Activated CD4-positive, alpha-beta memory T cell treated with anti-CD3 and anti-CD28 coated beads for 36 hours (primary cell): ENCODE measurements at regions of chr9 and their contacts with region 1.

Region 1: DNA sequence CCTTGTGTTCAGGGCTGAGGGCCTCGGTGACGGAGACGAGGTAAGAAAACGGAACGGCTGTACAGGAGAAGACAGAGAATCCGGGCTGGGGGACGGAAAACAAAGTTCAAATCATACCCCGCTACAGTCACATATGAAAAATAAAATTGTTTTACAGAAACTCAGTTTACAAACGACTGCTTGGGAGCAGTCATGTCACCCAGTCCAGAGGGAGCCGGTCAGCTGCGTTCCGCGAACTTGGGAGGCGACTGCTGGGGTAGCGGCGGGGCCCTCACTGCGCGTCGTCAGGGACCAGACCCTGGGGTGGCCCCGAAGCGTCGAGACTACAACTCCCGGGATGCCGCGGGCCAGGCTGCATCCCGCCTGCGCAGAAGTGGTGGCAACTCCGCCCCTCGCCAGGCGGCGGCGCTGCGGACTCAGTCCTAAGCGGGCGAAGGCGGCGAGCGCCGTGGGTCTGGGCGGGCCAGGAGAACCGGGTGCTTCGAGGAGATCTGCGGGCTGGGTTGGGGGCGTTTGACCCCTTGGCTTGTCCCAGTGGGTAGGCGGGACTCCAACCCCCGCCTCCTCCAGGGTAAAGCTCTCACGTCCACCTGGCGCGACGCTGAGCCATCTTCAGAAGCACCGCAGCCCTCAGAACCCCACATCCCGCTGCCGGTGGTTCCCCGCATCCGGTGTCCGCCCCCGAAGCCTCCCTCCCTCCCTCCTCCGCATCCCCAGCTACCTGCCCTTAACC is 4.0 kb downstream of the SIT1 start:
- DNase-seq: peak; percentile 95
- H3K4me3 Mint-ChIP-seq: peak overlapping the region; percentile 91
- H3K27ac Mint-ChIP-seq: peak overlapping the region; percentile 93
- H3K4me1 Mint-ChIP-seq: peaks cover 49% of the 10 kb centered on the region
- H3K27me3 Mint-ChIP-seq: no peaks in the 10 kb centered on the region

Region 2: DNA sequence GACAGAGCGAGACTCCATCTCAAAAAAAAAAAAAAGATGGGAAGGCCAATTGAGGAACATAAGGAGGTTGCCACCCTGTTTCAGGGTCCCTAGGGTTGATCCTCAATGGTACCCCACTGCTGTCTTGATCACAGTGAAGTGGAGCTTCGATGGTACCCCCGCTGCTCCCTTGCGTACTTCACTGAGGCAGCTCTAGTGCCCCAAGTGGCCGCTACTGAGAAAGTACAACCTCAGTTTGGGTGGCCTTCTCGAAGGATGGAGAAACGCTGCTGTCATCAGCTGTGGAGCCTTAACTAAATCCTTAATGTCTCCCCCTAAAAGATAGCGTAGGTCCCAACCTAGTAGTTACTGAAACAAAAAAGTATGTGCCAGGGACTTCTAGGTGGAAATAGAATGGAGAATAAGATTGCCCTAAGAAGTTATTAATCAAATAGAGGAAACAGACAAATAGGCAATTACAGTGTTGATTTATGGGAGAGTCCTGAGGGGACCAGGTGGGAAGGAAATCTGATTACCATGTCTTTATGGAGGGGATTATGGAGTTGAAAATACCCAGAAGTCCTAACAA is 35.4 kb before region 1 on chr9:
- CTCF ChIA-PET with region 1: interaction called, 32 read pairs
- POLR2A ChIA-PET with region 1: interaction called, 5 read pairs
- intact Hi-C with region 1: no loop called
- DNase-seq: peak; percentile 69
- H3K4me3 Mint-ChIP-seq: no peak overlapping the region
- H3K27ac Mint-ChIP-seq: no peak overlapping the region
- H3K4me1 Mint-ChIP-seq: peaks cover 12% of the 10 kb centered on the region
- H3K27me3 Mint-ChIP-seq: no peaks in the 10 kb centered on the region

Region 3: DNA sequence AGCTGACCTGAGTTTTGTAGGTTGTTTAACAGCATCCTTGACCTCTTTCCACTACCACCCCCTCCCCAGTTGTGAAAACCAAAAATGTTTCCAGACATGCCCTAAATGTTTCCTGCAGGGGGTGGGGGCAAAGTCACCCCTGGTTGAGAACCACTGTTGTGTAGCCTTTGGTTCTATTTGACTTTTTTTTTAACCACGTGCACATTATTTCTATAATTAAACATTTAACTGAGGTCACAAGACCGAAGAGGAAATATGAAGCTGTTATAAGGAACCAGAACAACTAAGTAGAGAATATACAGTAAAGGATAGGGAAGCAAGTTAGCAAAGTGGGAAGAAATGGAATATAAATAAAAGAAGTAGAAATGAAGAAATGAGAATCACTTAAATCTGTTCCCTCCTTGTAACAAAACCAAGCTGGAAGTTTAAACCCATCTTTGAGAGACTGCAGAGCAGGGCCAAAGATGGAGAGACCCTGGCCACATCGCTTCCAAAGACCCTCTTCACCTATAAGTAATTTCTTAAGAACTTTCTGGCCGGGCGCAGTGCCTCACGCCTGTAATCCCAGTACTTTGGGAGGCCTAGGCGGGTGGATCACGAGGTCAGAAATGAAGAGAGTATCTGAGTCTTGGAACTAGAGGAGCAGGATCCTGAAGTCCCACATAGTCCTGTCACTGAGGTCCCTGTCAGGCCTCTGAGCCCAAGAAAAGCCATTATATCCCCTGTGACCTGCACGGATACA is 10.4 kb before region 1 on chr9:
- CTCF ChIA-PET with region 1: interaction called, 5 read pairs
- POLR2A ChIA-PET with region 1: interaction called, 3 read pairs
- intact Hi-C with region 1: loop called (anchors 1 kb)
- DNase-seq: no peak
- H3K4me3 Mint-ChIP-seq: no peak overlapping the region
- H3K27ac Mint-ChIP-seq: peak overlapping the region; percentile 23
- H3K4me1 Mint-ChIP-seq: peaks cover 52% of the 10 kb centered on the region
- H3K27me3 Mint-ChIP-seq: no peaks in the 10 kb centered on the region

Region 4: DNA sequence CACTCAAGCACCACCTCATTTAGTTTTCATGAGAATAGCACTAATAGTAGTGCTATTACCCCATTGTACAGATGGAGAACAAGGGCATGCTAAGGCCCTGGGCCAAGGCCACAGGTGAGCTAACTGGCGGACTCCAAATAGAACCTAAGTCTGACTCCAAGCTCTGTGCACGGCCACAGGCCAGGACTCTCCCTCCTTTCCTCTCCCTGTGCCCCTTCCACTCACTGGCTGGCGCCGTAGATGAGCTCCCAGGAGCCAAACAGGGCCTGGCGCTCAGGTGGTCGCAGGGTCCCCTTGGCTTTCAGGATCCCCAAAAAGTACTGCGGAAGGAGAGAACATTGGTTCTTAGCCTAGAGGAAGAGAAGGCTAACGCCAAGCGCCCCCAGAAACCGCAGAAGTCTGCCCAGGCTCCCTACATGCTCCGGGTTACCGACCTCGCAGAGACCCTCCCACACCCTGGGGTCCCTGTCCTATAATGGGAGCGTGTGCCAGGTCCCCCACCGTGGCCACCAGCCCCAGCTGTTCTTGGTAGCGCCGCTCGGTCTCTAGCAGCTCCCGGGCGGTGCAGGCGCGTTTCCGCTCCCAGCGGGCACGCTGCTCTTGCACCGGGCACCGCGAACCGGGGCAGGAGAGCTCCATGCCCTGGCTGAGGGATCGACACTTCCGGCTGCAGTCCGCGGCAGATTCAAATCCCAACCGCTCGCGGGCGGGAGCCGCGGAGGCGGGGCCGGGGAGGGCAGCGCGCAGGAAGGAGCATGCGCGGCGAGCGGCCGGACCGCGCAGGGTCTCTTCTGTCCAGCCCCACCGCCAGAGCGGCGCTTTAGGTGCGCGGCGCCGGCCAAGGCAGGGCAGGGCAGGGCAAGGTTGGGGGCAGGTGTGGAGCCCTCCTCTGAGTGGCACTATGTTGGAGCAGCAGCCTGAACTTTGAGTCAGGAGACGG is 18.1 kb after region 1 on chr9 and contains the start of gene ARHGEF39:
- CTCF ChIA-PET with region 1: interaction called, 22 read pairs
- POLR2A ChIA-PET with region 1: interaction called, 9 read pairs
- intact Hi-C with region 1: loop called (anchors 2 kb)
- DNase-seq: peak; percentile 89
- H3K4me3 Mint-ChIP-seq: peak within 1 kb of the TSS; percentile 84
- H3K27ac Mint-ChIP-seq: peak within 1 kb of the TSS; percentile 73
- H3K4me1 Mint-ChIP-seq: peaks cover 53% of the 10 kb centered on the region
- H3K27me3 Mint-ChIP-seq: no peaks in the 10 kb centered on the region
- total RNA-seq, gene ARHGEF39: 28.1 to 28.2 TPM

Region 5: DNA sequence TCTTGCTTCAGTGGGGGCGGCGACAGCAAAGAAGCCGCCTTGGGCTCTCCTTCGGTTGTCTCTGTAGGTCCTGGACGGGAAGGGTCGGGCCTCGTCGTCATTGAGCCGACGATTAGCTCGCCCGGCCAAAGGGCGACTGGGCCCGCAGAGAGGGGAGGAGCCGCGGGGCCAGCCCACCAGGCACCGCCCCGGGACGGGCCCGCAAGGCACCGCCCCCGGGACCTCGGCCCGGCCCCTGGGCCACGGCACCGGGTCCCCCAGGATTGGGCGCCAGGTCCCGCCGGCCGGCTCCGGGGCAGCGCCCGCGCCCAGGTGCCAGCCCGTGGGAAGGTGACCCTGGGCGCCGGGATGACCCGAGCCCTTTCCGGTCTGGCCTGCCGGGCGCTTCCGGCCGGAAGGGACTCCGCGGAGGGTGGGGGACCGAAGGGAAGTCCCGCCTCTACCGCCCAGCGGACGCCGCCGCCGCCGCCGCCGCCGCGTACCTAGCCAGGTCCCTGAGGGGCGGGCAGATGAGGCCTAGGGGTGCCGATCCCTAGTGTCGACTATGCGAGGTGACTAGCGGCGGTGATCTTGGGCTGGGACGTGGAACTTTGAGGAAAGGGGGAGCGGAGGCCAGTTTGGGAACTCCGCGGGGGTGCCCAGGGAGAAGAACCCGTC is 102.3 kb after region 1 on chr9 and contains the starts of genes GBA2 and RGP1:
- CTCF ChIA-PET with region 1: interaction called, 10 read pairs
- POLR2A ChIA-PET with region 1: no interaction called
- intact Hi-C with region 1: no loop called
- DNase-seq: peak; percentile 82
- H3K4me3 Mint-ChIP-seq: peak within 1 kb of the TSS; percentile 93
- H3K27ac Mint-ChIP-seq: peak within 1 kb of the TSS; percentile 88
- H3K4me1 Mint-ChIP-seq: peaks cover 37% of the 10 kb centered on the region
- H3K27me3 Mint-ChIP-seq: no peaks in the 10 kb centered on the region
- total RNA-seq, gene GBA2: 30.4 to 30.7 TPM
- total RNA-seq, gene RGP1: 17.4 to 18.0 TPM